Spleen (tissue), 13 donors: ENCODE measurements at regions of chr1 and their contacts with region 1.

Region 1: DNA sequence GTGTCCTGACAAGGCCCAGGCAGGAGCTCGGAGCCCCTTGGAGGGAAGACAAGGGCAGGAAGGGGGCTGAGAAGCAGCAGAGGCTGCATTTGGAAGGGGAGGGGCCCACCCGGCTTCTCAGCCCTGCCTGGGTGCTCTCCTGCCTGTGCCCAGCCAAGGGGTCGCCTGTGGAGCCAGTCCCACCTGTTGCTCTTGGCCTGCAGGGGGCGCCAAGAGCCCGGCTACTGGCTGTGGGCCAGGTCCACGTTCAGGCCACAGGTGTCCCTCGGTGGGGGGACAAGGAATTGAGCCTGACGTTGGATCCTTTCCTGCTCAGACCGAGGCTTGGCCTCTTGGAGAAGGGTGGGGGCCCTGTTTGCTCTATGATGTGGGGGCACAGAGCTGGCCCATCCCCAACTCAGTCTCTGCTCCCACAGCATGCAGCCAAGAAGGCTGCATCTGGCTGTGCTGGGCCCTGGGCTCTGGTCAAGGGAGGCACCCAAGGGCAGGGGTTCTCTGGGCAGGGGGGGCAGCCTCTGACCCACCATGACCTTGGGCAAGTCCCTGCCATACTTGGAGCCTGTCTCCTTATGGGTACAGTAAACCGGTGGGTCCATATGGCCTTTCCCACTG is 10.9 kb downstream of the WNT4 start:
- DNase-seq: peak; percentile 85
- H3K4me3 ChIP-seq: no peak overlapping the region
- H3K27ac ChIP-seq: no peak overlapping the region
- H3K4me1 ChIP-seq: peaks cover 0 to 18% (median 4%) of the 10 kb centered on the region in 6 donors
- H3K27me3 ChIP-seq: peaks cover 0 to 36% (median 0%) of the 10 kb centered on the region in 7 donors
- CTCF ChIP-seq: peak; percentile 36 to 89 (median 75)
- POLR2A ChIP-seq: no peak

Region 2: DNA sequence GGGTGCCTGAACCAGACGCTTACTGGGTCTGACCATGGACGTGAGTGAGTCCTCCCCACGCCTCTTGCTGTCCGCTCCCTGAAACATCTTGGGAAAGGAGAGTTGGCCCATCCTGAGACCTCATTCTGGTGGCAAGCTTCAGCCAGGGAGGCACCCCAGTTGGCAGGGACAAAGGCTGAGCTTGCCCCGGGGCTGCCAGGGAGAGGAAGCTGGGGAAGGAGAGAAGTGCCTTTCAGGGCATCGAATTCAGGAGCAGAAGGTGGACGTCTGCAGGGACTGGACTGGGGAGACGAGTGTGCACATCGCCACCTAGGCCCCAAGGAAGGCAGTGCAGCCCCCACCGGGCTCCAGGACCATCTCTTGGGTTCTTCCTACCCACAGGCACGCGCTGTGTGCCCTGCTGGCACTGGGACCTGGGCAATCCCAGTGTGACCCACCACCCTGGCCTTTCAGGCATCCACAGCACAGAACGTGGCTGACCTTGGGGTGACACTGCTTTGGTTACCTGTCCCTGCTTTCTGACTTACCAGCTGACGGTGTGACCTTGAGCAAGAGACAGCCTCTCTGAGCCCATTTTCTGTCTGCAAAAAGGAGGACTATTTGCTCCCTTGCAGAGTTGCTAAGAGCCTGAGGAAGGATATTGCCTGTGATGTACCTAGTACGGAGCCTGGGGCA is 143.9 kb after region 1 on chr1:
- intact Hi-C with region 1: loop called (anchors 10 kb)
- DNase-seq: no peak
- H3K4me3 ChIP-seq: no peak overlapping the region
- H3K27ac ChIP-seq: no peak overlapping the region
- H3K4me1 ChIP-seq: no peaks in the 10 kb centered on the region
- H3K27me3 ChIP-seq: peaks cover 0 to 28% (median 0%) of the 10 kb centered on the region in 7 donors
- CTCF ChIP-seq: peak in 10 of 11 experiments; percentile 54 to 90 (median 78)
- POLR2A ChIP-seq: no peak

Region 3: GRCh38 chr1:22416555-22417454 is 284.8 kb after region 1 on chr1:
- intact Hi-C with region 1: loop called (anchors 10 kb)
- DNase-seq: peak; percentile 87
- H3K4me3 ChIP-seq: no peak overlapping the region
- H3K27ac ChIP-seq: no peak overlapping the region
- H3K4me1 ChIP-seq: peaks cover 3 to 11% (median 9%) of the 10 kb centered on the region in 6 donors
- H3K27me3 ChIP-seq: peaks cover 0 to 57% (median 10%) of the 10 kb centered on the region in 7 donors
- CTCF ChIP-seq: peak; percentile 47 to 90 (median 82)
- POLR2A ChIP-seq: no peak

Region 4: GRCh38 chr1:22641906-22642636 is 510.1 kb after region 1 on chr1:
- intact Hi-C with region 1: loop called (anchors 5 kb)
- DNase-seq: peak; percentile 91
- H3K4me3 ChIP-seq: peak overlapping the region in 1 of 8 donors; percentile 10
- H3K27ac ChIP-seq: peak overlapping the region in 5 of 8 donors; percentile 18 to 73 (median 54)
- H3K4me1 ChIP-seq: peaks cover 0 to 45% (median 9%) of the 10 kb centered on the region in 6 donors
- H3K27me3 ChIP-seq: peaks cover 0 to 55% (median 6%) of the 10 kb centered on the region in 7 donors
- CTCF ChIP-seq: peak; percentile 47 to 95 (median 91)
- POLR2A ChIP-seq: no peak